ENCODE measurements at regions of chr20 and their contacts with region 1.

Region 1: GRCh38 chr20:39264506-39265172 is 302.5 kb downstream of the DHX35 start:
- DNase-seq: peak; percentile 43 to 49
- H3K4me3 ChIP-seq: no peak overlapping the region
- H3K27ac ChIP-seq: no peak overlapping the region
- H3K4me1 ChIP-seq: no peaks in the 10 kb centered on the region
- H3K27me3 ChIP-seq: peaks cover 27% of the 10 kb centered on the region
- CTCF ChIP-seq: peak; percentile 95

Region 2: DNA sequence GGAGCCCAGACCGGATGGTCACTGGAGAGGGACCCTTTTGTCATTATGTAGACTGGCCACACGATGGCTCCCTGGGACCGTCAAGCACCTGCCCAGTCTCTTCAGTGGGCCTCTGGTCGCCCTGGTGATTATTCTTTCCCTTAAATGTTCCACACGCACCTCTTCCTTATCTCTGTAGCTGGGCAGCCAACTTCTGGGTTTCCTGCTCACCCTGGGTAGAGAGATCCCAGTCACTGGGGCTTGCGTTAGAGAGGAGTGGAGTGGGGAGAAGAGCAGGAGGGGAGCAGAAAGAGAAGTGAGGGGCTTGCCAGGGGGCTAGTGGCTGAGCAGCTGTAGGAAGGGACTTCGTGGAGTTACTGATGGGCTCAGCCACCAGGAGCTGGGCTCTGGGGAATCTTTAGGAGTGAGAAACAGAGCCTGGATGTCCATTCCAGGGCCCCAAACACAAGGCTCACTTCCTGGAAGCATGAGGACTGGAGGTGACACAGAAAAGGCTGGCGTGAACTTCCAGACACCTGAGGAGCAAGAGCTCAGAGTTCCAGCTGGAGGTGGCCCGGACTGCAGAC is 152.4 kb before region 1 on chr20:
- CTCF ChIA-PET with region 1: no interaction called
- POLR2A ChIA-PET with region 1: no interaction called
- intact Hi-C with region 1: loop called (anchors 5 kb)
- DNase-seq: peak in 1 of 2 experiments; percentile 43
- H3K4me3 ChIP-seq: no peak overlapping the region
- H3K27ac ChIP-seq: no peak overlapping the region
- H3K4me1 ChIP-seq: peaks cover 15% of the 10 kb centered on the region
- H3K27me3 ChIP-seq: peaks cover 18% of the 10 kb centered on the region
- CTCF ChIP-seq: peak; percentile 82

Region 3: GRCh38 chr20:39282619-39283392 is 18.2 kb after region 1 on chr20:
- CTCF ChIA-PET with region 1: no interaction called
- POLR2A ChIA-PET with region 1: no interaction called
- intact Hi-C with region 1: no loop called
- DNase-seq: no peak
- H3K4me3 ChIP-seq: no peak overlapping the region
- H3K27ac ChIP-seq: no peak overlapping the region
- H3K4me1 ChIP-seq: no peaks in the 10 kb centered on the region
- H3K27me3 ChIP-seq: peaks cover 29% of the 10 kb centered on the region
- CTCF ChIP-seq: no peak

Measured in PC-9 (cell line).